ENCODE measurements at regions of chr2 and their contacts with region 1.

Region 1: GRCh38 chr2:101205521-101205998 is 47.1 kb upstream of the CNOT11 start:
- DNase-seq: peak; percentile 18
- H3K4me3 Mint-ChIP-seq: peak overlapping the region; percentile 30
- H3K27ac Mint-ChIP-seq: no peak overlapping the region
- H3K4me1 Mint-ChIP-seq: no peaks in the 10 kb centered on the region
- H3K27me3 Mint-ChIP-seq: no peaks in the 10 kb centered on the region

Region 2: DNA sequence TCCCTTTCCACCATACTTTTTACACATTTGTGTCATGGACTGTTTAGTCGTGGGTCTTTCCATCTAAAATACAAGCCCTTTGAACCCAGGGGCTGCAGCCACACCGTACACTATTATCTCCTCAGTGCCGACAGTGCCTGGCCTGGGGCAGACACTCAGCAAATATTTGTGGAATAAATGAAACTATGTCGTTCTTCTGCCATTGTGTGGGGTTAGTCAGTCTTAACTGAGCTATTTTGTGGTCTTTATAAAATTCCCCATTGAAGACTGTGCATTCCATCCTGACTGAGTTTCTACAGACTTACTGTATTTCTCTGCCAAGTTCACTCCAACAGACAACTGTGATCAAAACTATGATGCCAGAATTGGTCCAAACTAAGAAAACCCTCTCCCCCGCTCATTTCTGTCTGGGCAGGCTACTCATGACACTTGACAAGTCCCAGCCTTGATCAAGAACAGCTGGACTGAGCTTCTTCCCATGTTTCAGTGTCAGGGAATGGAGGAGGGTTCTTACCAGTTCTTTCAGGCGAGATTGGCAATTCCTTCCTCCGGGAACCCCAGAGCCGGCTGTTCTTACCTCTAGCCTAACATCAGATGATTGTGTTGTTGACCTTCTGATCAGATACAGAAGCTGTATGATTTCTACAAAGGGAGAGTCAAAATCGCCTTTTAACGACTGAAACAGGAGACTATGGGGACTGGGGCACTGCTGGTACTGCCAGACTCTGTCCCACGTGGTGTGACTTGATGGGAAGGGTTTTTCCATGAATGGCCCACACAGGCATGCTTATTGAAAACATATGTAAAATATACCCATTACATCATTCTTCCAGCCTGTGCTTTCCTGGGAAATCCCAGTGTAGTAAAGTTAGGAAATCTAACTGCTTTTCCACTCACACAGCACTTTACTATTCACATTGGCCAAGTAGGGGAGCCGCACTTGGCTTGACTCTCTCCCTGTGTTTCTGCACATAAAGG is 463.0 kb before region 1 on chr2:
- intact Hi-C with region 1: no loop called
- DNase-seq: no peak
- H3K4me3 Mint-ChIP-seq: no peak overlapping the region
- H3K27ac Mint-ChIP-seq: no peak overlapping the region
- H3K4me1 Mint-ChIP-seq: peaks cover 5% of the 10 kb centered on the region
- H3K27me3 Mint-ChIP-seq: peaks cover 14% of the 10 kb centered on the region

Region 3: DNA sequence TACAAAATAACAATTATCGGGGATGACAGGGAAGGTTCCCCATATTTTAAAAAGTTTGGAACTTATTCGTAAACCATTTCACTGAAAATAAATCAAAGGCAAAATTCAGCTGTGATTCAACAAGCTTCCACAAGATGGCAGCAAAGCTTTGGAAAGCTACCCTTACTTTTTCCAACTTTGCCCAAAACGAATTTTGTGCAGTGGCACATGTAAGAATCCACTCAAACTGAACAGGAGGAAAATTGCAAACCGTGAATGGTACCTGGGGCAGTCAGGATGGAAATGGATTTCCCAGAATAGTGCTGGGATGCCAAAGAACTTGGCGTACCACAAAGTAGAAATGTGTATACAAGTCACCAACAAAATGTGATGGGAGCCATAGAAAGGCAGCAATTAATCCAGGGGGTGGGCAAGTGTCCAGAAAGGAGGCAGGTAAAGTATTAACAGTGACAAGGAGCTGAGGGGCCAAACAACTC is 192.8 kb before region 1 on chr2:
- intact Hi-C with region 1: loop called (anchors 1 kb)
- DNase-seq: no peak
- H3K4me3 Mint-ChIP-seq: no peak overlapping the region
- H3K27ac Mint-ChIP-seq: peak overlapping the region; percentile 77
- H3K4me1 Mint-ChIP-seq: peaks cover 22% of the 10 kb centered on the region
- H3K27me3 Mint-ChIP-seq: no peaks in the 10 kb centered on the region

Region 4: DNA sequence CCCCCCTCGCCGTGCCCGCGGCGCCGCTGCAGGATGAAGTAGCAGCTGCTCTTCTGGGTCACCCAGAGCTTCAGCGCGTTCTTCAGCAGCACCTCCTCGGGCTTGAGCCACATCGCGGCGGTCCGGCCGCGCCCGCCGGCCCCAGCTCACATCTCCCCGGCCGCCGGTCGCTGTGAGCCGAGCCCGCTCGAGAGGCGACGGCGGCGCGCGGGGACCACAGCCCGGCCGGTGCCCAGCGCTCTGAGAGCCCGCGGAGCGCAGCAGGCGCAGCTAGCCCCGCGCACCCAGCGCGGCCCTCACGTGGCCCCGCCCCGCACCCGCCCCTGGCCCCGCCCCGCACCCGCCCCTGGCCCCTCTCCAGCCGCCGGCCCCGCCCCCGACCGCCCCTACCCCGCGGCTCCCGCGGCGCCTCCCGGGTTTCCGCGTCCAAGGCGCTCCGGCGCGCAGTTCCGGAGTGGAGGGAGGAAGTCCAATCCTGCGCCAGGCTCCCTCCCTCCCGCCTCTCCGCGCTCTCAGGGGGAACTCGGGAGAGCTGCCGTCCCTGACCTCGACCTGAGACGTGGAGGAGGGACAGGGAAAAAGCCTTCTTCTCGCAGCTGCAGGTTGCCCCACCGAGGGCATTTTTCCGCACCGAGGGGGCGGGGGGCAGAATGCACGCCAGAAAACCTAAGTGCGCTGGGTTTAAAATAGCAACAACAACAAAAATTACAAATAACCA is 54.3 kb before region 1 on chr2 and contains the start of gene TBC1D8:
- intact Hi-C with region 1: loop called (anchors 2 kb)
- DNase-seq: peak; percentile 59
- H3K4me3 Mint-ChIP-seq: peak within 1 kb of the TSS; percentile 68
- H3K27ac Mint-ChIP-seq: no peak within 1 kb of the TSS
- H3K4me1 Mint-ChIP-seq: peaks cover 14% of the 10 kb centered on the region
- H3K27me3 Mint-ChIP-seq: peaks cover 71% of the 10 kb centered on the region
- total RNA-seq, gene TBC1D8: 0.87 and 1.3 TPM in 2 replicates

Measured in activated T-helper 2 cell treated with anti-CD3 and anti-CD28 coated beads, Interferon-gamma antibody, Interleukin-2, Interleukin-4, amounts not matched to agents 10 μg/mL and 5 μg/mL and 100 μg/mL, durations not matched to agents 14 hours and 24 hours and 36 hours (primary cell).